PC-9 (cell line): ENCODE measurements at regions of chr14 and their contacts with region 1.

Region 1: DNA sequence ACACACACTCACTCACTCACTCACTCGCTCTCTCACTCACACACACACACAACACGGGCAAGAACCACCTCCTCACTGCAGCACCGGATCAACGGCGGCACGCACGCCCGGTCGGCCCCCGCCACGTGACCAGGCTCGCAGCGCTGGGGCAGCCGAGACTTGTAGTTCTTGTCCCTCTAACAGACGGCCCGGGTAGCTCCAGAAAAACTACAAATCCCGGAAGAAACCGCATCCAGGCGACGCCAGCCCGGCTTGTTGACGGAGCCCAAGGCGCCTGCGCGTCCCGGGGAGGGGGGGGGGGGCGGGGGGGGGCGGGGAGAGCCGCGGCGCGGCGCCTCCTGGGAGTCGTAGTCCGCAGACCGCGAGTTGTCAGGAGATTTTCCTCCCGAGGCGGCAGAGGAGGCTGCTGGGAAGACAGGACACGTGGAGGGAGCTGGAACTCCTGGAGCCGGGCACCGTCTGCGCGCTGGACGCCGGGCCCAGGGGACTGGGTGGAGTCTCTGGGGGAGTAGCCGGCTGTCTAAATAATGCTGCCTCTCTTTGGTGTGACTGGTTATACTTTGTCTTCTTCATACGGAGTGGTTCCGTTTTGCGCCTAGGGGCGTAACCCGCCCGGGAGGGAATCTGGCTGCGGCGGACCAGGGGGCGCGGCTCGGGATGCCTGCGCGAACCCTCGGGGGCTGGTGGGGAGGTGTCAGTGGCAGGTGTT is at the start of gene MAX:
- DNase-seq: peak; percentile 96 to 99
- H3K4me3 ChIP-seq: peak within 1 kb of the TSS; percentile 88
- H3K27ac ChIP-seq: peak within 1 kb of the TSS; percentile 46
- H3K4me1 ChIP-seq: peaks cover 14% of the 10 kb centered on the region
- H3K27me3 ChIP-seq: no peaks in the 10 kb centered on the region
- CTCF ChIP-seq: no peak
- total RNA-seq, gene MAX: 76.1 and 84.1 TPM in 2 replicates

Region 2: GRCh38 chr14:65239143-65239937 is 136.7 kb after region 1 on chr14:
- CTCF ChIA-PET with region 1: interaction called, 4 read pairs
- POLR2A ChIA-PET with region 1: no interaction called
- intact Hi-C with region 1: loop called (anchors 2 kb)
- DNase-seq: peak; percentile 68 to 91
- H3K4me3 ChIP-seq: peak overlapping the region; percentile 44; the same call in 1 of the 2 replicates
- H3K27ac ChIP-seq: peak overlapping the region; percentile 96
- H3K4me1 ChIP-seq: peaks cover 90% of the 10 kb centered on the region
- H3K27me3 ChIP-seq: no peaks in the 10 kb centered on the region
- CTCF ChIP-seq: no peak

Region 3: DNA sequence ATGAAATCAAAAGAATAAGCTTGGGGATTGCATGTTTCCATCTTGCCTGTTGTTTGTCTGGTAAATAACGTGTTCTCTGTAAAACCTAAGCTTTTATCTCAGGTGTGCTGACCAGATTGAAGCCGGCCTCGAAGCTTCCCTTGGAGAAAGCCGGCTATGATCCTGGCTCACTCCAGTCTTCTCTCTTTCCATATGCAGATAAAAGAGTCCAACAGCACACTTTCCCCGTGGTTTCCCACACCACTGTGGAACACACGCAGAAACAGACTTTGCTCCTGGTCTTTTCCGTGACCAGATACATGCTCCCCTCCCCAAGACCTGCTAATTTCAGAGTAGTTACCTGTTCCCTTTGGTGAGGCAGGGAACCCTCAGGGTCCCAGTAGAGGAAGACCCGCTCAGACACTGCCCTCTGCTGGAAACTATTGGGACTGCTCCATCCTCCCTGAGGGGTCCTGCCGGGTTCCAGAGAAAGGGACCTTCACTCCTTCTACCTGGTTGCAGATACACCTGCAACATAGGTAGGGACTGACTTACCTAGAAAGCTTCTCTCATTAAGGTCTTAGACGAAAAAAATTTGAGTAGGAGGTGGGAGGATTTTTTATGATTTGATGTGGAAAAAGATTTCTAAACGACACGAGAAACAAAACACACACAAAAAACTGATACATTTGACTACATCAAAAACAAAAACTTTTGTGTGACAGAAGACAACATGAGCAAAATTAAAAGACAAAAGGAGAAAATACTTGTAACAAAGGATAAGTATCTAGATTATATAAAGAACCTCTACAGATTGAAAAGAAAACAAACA is 968.1 kb after region 1 on chr14:
- CTCF ChIA-PET with region 1: no interaction called
- POLR2A ChIA-PET with region 1: no interaction called
- intact Hi-C with region 1: loop called (anchors 2 kb)
- DNase-seq: peak in 1 of 2 experiments; percentile 63
- H3K4me3 ChIP-seq: no peak overlapping the region
- H3K27ac ChIP-seq: no peak overlapping the region
- H3K4me1 ChIP-seq: no peaks in the 10 kb centered on the region; the same call in 1 of the 2 replicates
- H3K27me3 ChIP-seq: no peaks in the 10 kb centered on the region
- CTCF ChIP-seq: peak; percentile 98